Activated CD4-positive, alpha-beta memory T cell treated with anti-CD3 and anti-CD28 coated beads, Interleukin-2, amount 10 ng/mL, durations not matched to agents 7 days and 5 days (primary cell): ENCODE measurements at regions of chr10 and their contacts with region 1.

Region 1: DNA sequence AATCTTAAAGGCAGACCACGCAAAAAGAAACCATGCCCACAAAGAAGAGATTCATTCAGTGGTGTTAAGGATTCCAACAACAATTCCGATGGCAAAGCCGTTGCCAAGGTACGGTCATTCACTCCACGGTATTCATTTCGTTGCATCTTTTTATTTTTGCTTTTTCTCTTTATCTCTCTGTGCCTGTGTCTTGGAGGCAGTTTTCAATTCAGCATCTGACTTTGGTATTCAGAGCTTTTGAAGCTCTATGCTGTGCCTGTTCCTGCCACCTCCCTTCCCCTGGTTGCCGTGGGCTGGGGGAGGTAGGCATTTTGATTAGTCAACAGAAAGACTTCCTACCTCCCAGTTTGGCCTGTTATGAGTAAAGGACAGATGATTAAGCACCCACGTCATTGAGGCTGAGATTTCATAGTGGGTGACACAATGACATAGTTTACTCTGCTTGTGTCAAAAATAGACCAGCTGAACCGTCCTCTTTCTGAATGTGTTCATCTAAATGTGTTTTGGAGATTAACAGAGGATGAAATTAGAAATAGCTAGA is 149.5 kb downstream of the ARID5B start:
- DNase-seq: peak; percentile 86
- H3K4me3 Mint-ChIP-seq: peak overlapping the region; percentile 98
- H3K27ac Mint-ChIP-seq: peak overlapping the region; percentile 99
- H3K4me1 Mint-ChIP-seq: peaks cover 75% of the 10 kb centered on the region
- H3K27me3 Mint-ChIP-seq: no peaks in the 10 kb centered on the region

Region 2: DNA sequence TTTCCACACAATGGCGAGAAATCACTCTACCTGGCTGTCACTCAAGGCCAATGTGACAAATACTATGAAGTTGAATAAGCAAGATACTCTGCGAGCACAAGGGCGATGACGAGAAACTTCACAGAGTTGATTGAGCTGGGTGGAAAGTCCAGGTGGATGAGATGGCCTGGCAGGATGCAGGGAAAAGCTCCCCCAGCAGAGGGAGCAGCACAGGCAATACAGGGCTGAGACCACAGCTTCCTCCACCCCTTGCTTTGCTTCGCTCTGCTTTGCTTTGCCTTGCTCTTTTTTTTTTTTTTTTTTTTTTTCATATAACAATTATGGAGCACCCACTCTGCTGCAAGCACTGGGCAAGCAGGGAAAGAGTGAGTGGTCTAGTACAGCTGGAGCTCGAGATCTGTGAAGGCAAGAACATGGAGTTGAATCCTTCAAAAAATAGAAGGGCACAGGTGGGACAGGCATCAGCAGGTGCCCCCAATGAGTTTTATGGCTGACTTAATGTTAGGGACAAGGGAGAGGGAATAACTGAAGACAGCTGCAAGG is 300.0 kb before region 1 on chr10:
- CTCF ChIA-PET with region 1: interaction called, 4 read pairs
- POLR2A ChIA-PET with region 1: interaction called, 14 read pairs
- DNase-seq: peak; percentile 76
- H3K4me3 Mint-ChIP-seq: no peak overlapping the region
- H3K27ac Mint-ChIP-seq: peak overlapping the region; percentile 80
- H3K4me1 Mint-ChIP-seq: peaks cover 31% of the 10 kb centered on the region
- H3K27me3 Mint-ChIP-seq: no peaks in the 10 kb centered on the region

Region 3: GRCh38 chr10:61937631-61938351 is 113.2 kb before region 1 on chr10:
- CTCF ChIA-PET with region 1: interaction called, 3 read pairs
- POLR2A ChIA-PET with region 1: interaction called, 142 read pairs
- DNase-seq: no peak
- H3K4me3 Mint-ChIP-seq: peak overlapping the region; percentile 37
- H3K27ac Mint-ChIP-seq: peak overlapping the region; percentile 64
- H3K4me1 Mint-ChIP-seq: peaks cover 86% of the 10 kb centered on the region
- H3K27me3 Mint-ChIP-seq: no peaks in the 10 kb centered on the region

Region 4: GRCh38 chr10:61952028-61952674 is 98.8 kb before region 1 on chr10:
- CTCF ChIA-PET with region 1: no interaction called
- POLR2A ChIA-PET with region 1: no interaction called
- DNase-seq: no peak
- H3K4me3 Mint-ChIP-seq: no peak overlapping the region
- H3K27ac Mint-ChIP-seq: no peak overlapping the region
- H3K4me1 Mint-ChIP-seq: peaks cover 31% of the 10 kb centered on the region
- H3K27me3 Mint-ChIP-seq: no peaks in the 10 kb centered on the region

Region 5: DNA sequence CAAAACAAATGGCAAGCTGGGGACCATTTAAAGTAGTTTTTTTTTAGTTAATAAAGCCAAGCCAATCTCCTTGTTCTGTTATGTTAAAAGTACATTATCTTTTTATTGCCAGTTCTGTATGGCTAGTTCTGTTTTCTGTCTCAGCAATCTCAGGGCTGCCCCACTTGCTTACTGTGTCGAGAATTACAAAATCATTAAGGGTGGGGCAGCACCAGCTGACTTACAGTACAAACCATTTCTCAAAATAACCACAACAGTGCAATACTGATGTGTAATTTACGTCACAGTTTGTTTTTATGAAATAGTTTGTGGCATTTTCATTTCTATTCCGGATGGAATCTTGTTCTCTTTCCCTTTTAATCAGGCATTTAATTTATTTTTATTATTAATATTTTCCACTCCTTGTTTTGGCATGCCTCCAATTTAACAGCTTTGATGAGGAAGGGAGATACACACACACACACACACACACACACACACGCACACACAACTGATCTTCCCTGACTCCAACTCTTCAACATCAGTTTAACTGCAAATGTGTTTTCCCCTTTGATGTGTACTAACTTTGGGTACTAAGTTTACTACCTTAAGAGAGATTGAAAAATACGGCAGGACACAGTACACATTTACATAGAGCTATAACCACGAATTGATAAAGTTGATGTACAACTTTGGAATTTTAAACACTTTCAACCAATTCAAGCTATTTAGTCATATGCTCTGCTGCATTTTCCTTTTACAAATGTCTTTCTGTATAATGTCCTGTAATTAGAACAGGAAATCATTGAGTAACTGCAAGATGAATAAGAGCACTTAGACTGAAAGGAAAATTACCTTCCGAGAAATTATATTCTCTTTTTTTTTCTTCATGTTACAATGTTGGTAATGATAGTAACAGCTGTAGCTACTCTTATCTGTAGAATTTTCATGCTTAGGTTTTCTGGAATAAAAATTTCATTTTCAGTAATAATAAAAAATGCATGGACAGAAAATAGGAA is 58.0 kb before region 1 on chr10:
- CTCF ChIA-PET with region 1: interaction called, 10 read pairs
- POLR2A ChIA-PET with region 1: interaction called, 315 read pairs
- DNase-seq: peak; percentile 75
- H3K4me3 Mint-ChIP-seq: peak overlapping the region; percentile 69
- H3K27ac Mint-ChIP-seq: peak overlapping the region; percentile 91
- H3K4me1 Mint-ChIP-seq: peaks cover 76% of the 10 kb centered on the region
- H3K27me3 Mint-ChIP-seq: no peaks in the 10 kb centered on the region

Region 6: DNA sequence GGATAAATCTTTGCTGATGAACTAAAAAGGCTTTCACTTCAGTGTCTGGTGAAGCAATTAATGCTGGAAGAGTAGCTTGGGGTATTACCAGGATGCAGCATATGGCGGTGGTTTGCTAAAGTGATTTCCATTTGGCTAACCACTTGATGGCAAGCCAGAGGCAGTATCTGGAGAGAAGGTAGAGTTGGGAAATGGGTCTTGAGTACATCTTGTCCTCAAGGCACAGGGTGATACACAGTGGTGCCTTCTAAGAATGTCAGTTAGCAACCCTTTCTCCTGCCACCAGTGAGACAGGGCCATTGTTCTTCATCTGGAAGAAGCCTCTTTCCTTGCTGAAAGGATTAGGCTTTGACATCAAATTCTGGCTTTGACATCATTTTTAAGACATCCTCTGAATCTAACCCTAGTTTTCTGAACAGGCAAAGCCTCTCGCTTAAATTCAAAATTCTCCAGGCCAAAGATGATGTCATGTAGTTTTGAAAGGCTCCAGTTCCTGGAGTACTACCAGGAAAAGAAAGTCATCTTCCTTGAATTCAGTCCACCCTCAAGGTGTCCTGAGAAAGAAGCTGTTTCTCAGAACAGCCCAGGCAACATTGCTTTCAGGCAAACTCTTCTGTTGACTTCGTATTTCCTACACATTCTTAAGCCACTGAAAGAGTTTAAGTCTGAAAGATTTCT is 13.0 kb after region 1 on chr10:
- CTCF ChIA-PET with region 1: interaction called, 4 read pairs
- POLR2A ChIA-PET with region 1: interaction called, 440 read pairs
- DNase-seq: no peak
- H3K4me3 Mint-ChIP-seq: peak overlapping the region; percentile 36
- H3K27ac Mint-ChIP-seq: peak overlapping the region; percentile 89
- H3K4me1 Mint-ChIP-seq: peaks cover 88% of the 10 kb centered on the region
- H3K27me3 Mint-ChIP-seq: no peaks in the 10 kb centered on the region

Region 7: DNA sequence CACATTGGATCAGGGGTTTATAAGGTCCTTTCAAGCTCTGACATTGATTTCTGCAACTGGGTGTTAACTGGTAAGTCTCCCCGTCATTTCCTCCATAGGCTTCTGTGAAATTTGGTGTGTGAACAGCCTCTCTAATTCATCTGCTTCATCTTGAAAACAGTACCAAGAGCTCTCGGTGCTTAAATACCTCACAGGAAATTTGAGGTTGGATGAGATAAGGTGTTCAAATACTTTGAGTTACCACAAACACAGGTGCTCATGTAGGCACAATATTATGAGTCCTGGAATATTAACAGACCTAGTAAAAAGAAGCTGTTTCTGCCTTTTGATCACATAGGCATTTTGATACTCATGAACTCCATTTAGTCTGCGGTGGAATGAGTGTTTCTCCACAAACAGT is 132.5 kb after region 1 on chr10:
- CTCF ChIA-PET with region 1: interaction called, 10 read pairs
- POLR2A ChIA-PET with region 1: interaction called, 446 read pairs
- DNase-seq: peak; percentile 49
- H3K4me3 Mint-ChIP-seq: peak overlapping the region; percentile 9
- H3K27ac Mint-ChIP-seq: peak overlapping the region; percentile 91
- H3K4me1 Mint-ChIP-seq: peaks cover 84% of the 10 kb centered on the region
- H3K27me3 Mint-ChIP-seq: no peaks in the 10 kb centered on the region

Region 8: GRCh38 chr10:63268798-63269503 is 1218.0 kb after region 1 on chr10:
- CTCF ChIA-PET with region 1: no interaction called
- POLR2A ChIA-PET with region 1: interaction called, 17 read pairs
- DNase-seq: peak; percentile 86
- H3K4me3 Mint-ChIP-seq: peak overlapping the region; percentile 93
- H3K27ac Mint-ChIP-seq: peak overlapping the region; percentile 99
- H3K4me1 Mint-ChIP-seq: peaks cover 21% of the 10 kb centered on the region
- H3K27me3 Mint-ChIP-seq: no peaks in the 10 kb centered on the region